Activated T-helper 2 cell treated with anti-CD3 and anti-CD28 coated beads, Interferon-gamma antibody, Interleukin-2, Interleukin-4, amounts not matched to agents 10 μg/mL and 5 μg/mL and 100 μg/mL, durations not matched to agents 14 hours and 24 hours and 36 hours (primary cell): ENCODE measurements at regions of chr7 and their contacts with region 1.

Region 1: DNA sequence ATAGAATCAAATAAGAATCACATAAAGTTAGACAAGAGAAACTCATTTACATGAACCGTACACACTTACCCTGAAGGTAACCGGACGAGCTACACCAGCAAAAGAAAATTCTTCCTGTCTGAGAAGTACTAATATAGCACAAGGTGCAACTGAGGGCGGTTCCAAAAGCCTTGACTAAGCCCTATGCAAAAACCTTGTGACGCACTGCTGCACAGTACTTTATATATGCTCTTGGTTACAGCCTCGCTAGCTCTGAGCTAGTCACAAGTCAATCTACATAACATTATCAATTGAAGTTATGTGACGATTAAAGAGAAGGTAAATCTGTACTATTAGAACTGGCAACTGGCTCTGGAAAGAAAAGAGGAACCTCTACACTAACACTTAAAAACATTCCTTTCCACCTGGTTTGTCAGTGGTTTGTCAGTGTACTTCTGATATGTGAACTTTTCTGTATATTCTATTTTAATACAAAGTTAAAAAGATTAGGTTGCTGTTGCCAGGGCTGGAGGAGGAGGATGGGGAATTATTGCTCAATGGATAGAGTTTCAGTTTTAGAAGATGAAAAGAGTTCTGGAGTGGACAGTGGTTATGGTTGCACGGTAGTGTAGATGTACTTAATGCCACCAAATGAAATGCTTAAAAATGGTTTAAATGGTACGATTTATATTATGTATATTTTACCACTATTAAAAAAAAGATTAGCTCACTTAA is 21.6 kb downstream of the NT5C3A start:
- DNase-seq: peak; percentile 62
- H3K4me3 Mint-ChIP-seq: peak overlapping the region; percentile 37
- H3K27ac Mint-ChIP-seq: peak overlapping the region; percentile 56
- H3K4me1 Mint-ChIP-seq: peaks cover 48% of the 10 kb centered on the region
- H3K27me3 Mint-ChIP-seq: no peaks in the 10 kb centered on the region

Region 2: DNA sequence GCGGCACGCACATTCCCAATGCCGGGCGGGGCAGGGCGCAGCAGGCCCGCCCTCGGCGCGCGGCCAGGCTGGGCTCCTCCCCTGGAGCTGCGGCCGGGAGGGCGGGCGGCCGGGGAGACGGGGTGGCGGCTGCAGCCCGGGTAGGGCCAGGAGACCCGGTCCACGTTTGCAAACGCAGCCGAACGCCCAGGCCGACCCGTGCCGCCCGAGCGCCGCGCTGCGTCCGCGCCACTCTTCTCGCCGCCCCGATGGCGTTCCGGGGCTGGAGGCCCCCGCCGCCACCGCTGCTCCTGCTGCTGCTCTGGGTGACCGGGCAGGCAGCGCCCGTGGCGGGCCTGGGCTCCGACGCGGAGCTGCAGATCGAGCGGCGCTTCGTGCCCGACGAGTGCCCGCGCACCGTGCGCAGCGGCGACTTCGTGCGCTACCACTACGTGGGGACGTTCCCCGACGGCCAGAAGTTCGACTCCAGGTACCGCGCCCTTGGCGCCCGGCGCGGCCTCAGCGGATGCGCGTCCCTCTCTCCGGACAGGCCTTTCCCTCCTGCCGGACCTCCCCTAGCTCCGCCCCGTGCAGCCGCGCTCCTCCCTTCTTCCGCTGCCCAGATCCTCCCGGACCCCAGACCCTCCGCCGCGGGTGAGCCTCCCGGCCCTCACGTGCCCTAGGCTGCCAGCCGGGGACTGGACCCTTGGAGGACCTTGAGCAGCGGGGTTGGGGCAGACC is 83.5 kb before region 1 on chr7 and contains the start of gene FKBP9:
- intact Hi-C with region 1: loop called (anchors 5 kb)
- DNase-seq: peak; percentile 14
- H3K4me3 Mint-ChIP-seq: peak within 1 kb of the TSS; percentile 83
- H3K27ac Mint-ChIP-seq: no peak within 1 kb of the TSS
- H3K4me1 Mint-ChIP-seq: peaks cover 4% of the 10 kb centered on the region
- H3K27me3 Mint-ChIP-seq: peaks cover 24% of the 10 kb centered on the region
- total RNA-seq, gene FKBP9: 3.0 and 3.5 TPM in 2 replicates